ENCODE measurements at regions of chr1 and their contacts with region 1.

Region 1: DNA sequence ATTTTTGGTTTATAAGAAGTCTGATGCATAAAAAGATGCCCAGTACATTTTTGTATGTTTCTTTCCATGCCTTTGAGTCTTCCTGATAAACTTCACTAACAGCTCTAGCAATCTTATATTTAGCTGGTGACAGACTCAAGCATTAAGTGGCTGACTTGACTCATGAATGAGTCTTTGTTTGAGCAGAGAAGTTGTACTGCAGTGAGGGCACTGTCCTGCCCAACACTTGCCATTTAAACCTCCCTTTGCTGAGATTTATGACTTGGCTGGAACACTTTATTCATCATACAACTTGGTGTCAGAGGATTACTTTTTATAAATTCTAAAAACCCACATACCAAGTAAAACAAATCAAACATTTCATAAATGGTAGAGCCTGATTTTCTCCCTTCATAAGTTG is 14.6 kb upstream of the CAMSAP2 start:
- DNase-seq: no peak
- H3K4me3 ChIP-seq: no peak overlapping the region
- CTCF ChIP-seq: no peak
- POLR2A ChIP-seq: no peak

Region 2: DNA sequence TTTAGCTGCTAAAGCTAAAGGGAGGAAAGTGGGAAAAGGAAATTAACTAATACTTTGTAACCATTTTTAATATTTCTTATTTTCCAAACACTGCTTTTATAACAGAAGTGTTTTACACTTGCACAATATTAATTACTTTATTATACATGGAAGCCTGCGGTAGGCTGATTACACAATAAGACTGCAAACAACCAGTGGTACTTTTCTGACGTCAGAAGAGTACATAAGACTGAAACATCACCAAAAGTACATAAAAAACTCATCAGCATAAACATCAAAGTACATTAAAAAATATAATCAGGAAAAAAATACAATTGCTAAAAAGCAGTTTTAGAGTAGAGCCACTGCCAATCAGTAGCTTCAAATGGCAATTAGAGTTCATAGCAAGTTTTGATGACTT is 318.8 kb before region 1 on chr1:
- intact Hi-C with region 1: no loop called
- DNase-seq: no peak
- H3K4me3 ChIP-seq: no peak overlapping the region
- CTCF ChIP-seq: no peak
- POLR2A ChIP-seq: no peak

Region 3: DNA sequence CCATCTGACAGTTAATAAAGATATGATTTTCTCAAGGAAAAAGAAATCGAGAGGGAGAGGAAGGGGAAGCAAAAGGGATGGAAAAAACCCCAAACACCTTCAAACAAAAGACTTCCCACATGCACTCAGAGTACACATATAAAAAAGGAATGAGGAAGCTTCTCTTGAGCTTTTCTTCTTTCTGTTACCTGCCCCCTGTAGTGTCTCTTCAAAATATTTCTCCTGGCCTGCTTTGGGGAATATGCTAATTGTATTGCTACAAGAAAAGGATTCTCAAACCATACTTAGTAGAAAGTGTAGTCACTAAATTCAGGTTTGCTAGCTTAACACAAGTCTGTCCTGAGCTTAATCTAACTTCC is 162.2 kb before region 1 on chr1:
- intact Hi-C with region 1: no loop called
- DNase-seq: no peak
- H3K4me3 ChIP-seq: no peak overlapping the region
- CTCF ChIP-seq: no peak
- POLR2A ChIP-seq: no peak

Region 4: GRCh38 chr1:200684015-200684414 is 40.0 kb before region 1 on chr1:
- intact Hi-C with region 1: loop called (anchors 5 kb)
- DNase-seq: no peak
- H3K4me3 ChIP-seq: no peak overlapping the region
- CTCF ChIP-seq: no peak
- POLR2A ChIP-seq: no peak